Activated CD4-positive, alpha-beta memory T cell treated with anti-CD3 and anti-CD28 coated beads, Interleukin-2, amount 10 ng/mL, durations not matched to agents 7 days and 5 days (primary cell): ENCODE measurements at regions of chr3 and their contacts with region 1.

Region 1: DNA sequence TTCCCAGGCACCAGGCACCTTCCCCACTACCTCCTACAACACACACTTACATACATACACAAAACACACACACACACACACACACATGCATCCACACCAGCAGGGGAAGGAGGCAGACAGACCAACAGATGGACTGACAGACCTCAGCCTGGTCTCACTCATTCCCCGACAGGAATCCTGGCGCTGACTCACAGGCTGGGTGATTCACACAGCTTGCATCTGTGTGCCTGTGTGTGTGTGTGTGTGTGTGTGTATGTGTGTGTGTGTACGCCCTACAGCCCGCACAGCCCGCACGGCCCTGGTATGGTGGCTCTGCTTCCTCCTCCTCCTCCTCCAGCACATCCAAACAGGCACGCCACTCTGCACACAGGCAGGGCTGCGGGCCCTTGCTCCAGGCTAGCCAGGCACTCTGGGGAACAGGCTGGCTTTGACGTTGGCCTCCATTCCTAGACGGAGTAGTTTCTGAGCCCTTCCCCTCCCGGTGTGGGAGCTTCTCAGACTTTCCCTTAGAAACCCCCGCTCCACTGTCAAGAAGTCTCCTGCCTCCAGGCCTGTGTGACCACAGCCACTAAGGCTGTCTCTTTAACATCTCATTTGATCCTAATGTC is 6.3 kb downstream of the CSRNP1 start:
- DNase-seq: peak; percentile 82
- H3K4me3 Mint-ChIP-seq: peak overlapping the region; percentile 98
- H3K27ac Mint-ChIP-seq: peak overlapping the region; percentile 98
- H3K4me1 Mint-ChIP-seq: peaks cover 73% of the 10 kb centered on the region
- H3K27me3 Mint-ChIP-seq: no peaks in the 10 kb centered on the region

Region 2: GRCh38 chr3:39107388-39108199 is 39.5 kb before region 1 on chr3 and contains the starts of genes GORASP1 and TTC21A:
- CTCF ChIA-PET with region 1: interaction called, 9 read pairs
- POLR2A ChIA-PET with region 1: interaction called, 29 read pairs
- DNase-seq: peak; percentile 81
- H3K4me3 Mint-ChIP-seq: peak within 1 kb of the TSS; percentile 84
- H3K27ac Mint-ChIP-seq: peak within 1 kb of the TSS; percentile 91
- H3K4me1 Mint-ChIP-seq: peaks cover 50% of the 10 kb centered on the region
- H3K27me3 Mint-ChIP-seq: no peaks in the 10 kb centered on the region
- total RNA-seq, gene GORASP1: 52.0 to 53.1 TPM
- total RNA-seq, gene TTC21A: 11.2 to 12.1 TPM

Region 3: DNA sequence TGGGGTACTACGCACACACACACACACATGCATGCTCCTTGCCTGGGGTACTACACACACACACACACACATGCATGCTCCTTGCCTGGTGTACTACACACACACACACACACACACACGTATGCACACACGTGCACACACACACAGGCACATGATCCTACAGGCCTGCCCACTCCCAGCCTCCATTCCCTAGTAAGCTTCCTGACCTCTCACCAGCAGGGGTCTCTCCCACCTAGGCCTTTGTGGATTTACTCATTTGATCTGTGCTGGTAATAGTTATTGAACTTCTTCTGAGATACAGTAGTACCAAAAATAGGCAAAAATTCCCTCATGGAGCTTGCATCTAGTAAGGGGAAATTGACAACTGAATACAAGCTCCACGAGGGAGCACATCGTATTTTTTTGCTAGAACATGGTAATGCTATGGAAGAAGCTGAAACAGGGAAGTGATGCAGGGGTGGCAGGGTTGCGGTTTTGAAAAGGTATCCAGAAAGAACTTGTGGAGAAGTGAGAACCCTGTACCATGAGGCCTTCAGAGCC is 20.5 kb before region 1 on chr3:
- CTCF ChIA-PET with region 1: interaction called, 4 read pairs
- POLR2A ChIA-PET with region 1: interaction called, 12 read pairs
- DNase-seq: no peak
- H3K4me3 Mint-ChIP-seq: no peak overlapping the region
- H3K27ac Mint-ChIP-seq: no peak overlapping the region
- H3K4me1 Mint-ChIP-seq: peaks cover 24% of the 10 kb centered on the region
- H3K27me3 Mint-ChIP-seq: no peaks in the 10 kb centered on the region

Region 4: DNA sequence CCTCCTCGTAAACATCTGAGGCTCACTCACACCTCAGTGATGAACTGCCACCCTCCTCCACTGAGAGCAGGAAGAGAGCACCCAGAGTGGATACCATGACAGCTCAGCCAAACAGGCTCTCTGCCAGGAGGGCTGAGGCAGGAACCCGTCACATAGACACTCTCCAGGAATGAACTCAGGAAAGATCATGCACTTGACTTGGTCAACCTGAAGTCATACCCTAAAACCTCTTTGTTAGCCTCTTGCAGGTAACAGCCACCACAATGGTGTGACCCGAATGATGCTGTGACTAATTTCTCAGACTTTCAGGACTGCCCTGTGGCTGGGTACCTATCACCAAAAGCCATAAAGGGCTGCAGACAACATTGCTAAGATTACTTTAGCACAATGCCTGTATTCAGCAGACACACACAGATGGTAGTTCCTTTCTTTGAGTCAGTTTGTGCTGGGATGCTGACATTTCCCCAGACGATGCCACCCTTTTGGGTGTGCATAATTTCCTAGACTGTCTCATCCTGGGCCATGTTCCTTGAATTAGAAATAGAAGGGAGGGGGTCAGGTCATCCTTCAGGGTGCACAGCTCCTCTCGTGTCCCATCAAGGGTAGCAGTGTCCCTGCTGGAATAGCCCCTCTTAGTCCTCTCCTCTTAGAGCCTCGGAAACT is 102.5 kb after region 1 on chr3:
- CTCF ChIA-PET with region 1: no interaction called
- POLR2A ChIA-PET with region 1: no interaction called
- DNase-seq: no peak
- H3K4me3 Mint-ChIP-seq: no peak overlapping the region
- H3K27ac Mint-ChIP-seq: no peak overlapping the region
- H3K4me1 Mint-ChIP-seq: peaks cover 8% of the 10 kb centered on the region
- H3K27me3 Mint-ChIP-seq: peaks cover 14% of the 10 kb centered on the region